ENCODE measurements at regions of chr5 and their contacts with region 1.

Region 1: GRCh38 chr5:126483156-126483555 is 59.9 kb downstream of the GRAMD2B start:
- DNase-seq: no peak

Region 2: GRCh38 chr5:126403876-126404275 is 79.3 kb before region 1 on chr5:
- in situ Hi-C with region 1: loop called (anchors 10 kb)
- DNase-seq: no peak